H1 (cell line): ENCODE measurements at regions of chr7 and their contacts with region 1.

Region 1: DNA sequence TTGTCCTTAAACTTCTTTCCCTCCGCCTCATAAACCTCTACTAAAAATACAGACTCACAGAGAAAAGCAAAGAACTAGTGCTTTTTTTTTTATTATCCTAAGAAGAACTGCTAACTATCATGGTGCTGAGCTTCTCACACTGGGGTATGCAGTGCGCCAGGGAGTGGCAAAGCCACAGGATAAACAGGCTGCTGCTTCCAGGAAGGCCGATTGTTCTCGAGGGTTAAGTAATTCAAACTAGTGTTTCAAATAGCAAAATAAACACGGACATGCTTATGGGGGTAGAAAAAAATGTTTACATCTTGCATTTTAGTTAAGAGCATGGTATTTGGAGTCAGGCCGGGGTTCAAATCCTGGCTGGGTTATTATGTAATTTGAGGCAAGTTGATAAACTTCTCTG is 157.0 kb downstream of the TAX1BP1 start:
- DNase-seq: no peak
- H3K4me3 ChIP-seq: peak overlapping the region in 1 of 4 experiments; percentile 6; a peak in 1 of 8 replicates
- H3K27ac ChIP-seq: no peak overlapping the region; the same call in 1 of the 2 replicates
- H3K4me1 ChIP-seq: peaks cover 3 to 10% (median 8%) of the 10 kb centered on the region in 4 experiments
- H3K27me3 ChIP-seq: no peaks in the 10 kb centered on the region
- CTCF ChIP-seq: no peak
- EP300 ChIP-seq: no peak
- POLR2A ChIP-seq: no peak
- RAD21 ChIP-seq: no peak

Region 2: GRCh38 chr7:27910326-27910725 is 13.3 kb after region 1 on chr7:
- CTCF ChIA-PET with region 1: interaction called, 12 read pairs
- POLR2A ChIA-PET with region 1: interaction called, 5 read pairs
- DNase-seq: peak in 1 of 2 experiments; percentile 61
- H3K4me3 ChIP-seq: peak overlapping the region in 3 of 4 experiments; percentile 9 to 46 (median 20); a peak in 4 of 8 replicates
- H3K27ac ChIP-seq: peak overlapping the region; percentile 55; the same call in 1 of the 2 replicates
- H3K4me1 ChIP-seq: peaks cover 18 to 41% (median 31%) of the 10 kb centered on the region in 4 experiments
- H3K27me3 ChIP-seq: no peaks in the 10 kb centered on the region
- CTCF ChIP-seq: no peak
- EP300 ChIP-seq: peak in 1 of 2 experiments; percentile 72; a peak in 1 of 3 replicates
- POLR2A ChIP-seq: no peak
- RAD21 ChIP-seq: no peak

Region 3: DNA sequence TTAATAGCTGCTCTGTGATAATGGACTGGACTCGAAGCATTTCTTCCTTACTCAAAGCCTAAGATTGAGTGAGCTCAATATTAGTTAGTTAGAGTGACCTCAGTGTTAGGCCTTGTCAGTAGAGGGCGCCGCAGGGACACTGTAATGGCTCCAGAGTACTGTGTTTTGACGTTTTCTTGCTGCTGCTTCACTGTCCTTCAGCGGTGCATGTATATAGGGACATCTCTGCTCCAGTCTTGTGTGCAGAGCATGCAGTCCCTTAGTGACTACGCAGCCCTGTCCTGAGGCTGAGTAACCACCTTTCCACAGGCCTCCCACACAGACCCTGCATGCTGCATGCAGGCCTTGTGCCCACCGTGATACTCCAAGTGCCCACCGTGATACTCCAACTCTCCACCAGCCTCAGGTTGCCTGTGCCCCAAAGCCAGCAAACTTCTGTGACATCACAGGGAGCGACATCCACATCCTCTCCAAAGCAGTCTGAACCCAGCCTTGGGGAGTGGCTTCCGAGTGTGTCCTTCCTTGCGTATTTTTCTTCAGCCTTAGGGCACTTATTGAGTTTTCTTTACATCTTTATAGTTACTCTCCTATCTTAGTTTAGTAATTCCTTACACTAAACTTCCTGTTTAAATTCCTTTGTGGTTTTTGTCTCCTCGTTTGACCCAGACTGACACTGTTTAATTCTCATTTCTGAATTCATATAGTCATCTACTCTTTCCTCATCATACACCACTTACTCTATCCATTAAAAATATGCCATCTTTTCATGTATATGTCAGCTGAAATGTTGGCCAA is 165.4 kb after region 1 on chr7:
- CTCF ChIA-PET with region 1: no interaction called
- POLR2A ChIA-PET with region 1: no interaction called
- DNase-seq: peak in 1 of 2 experiments; percentile 86
- H3K4me3 ChIP-seq: no peak overlapping the region
- H3K27ac ChIP-seq: no peak overlapping the region
- H3K4me1 ChIP-seq: peaks cover 2 to 7% (median 3%) of the 10 kb centered on the region in 4 experiments; a peak in 6 of 7 replicates
- H3K27me3 ChIP-seq: no peaks in the 10 kb centered on the region
- CTCF ChIP-seq: peak; percentile 62 to 92 (median 75)
- EP300 ChIP-seq: no peak
- POLR2A ChIP-seq: no peak
- RAD21 ChIP-seq: peak; percentile 70 to 80